ENCODE measurements at regions of chr17 and their contacts with region 1.

Region 1: GRCh38 chr17:74736513-74737298 is at the start of gene RAB37:
- DNase-seq: peak; percentile 65
- ATAC-seq: peak; percentile 19
- H3K4me3 Mint-ChIP-seq: peak within 1 kb of the TSS; percentile 68
- H3K27ac Mint-ChIP-seq: peak within 1 kb of the TSS; percentile 79
- H3K4me1 Mint-ChIP-seq: peaks cover 49% of the 10 kb centered on the region
- H3K27me3 Mint-ChIP-seq: no peaks in the 10 kb centered on the region
- total RNA-seq, gene RAB37: 2.7 to 3.5 TPM

Region 2: DNA sequence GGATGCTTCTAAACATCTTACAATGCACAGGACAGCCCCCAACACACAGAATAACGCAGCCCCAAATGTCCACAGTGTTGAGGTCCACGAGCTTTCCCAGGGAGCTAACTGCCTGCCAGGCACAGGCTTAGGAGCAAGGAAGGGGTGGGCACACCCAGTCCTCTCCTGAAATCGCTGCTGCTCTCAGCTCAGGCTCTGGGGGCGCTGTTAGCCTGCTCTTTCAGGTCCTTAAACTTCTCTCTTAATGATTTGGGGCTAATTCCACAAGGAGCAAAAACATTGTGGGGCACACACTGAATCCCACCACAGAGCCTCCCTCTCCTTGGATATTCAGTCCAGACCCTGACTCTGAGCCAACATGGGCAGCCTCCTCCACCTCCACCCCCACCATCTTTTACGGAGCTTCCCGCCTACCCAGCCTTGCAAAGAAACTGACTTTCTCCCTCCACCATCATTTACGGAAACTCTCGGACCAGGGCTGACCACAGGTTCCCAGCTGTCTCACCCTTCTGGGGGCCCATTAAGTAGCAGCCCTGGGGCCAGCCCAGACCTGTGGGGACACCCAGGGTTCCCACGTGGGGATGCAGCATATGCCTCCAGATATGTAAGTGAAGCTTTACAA is 170.5 kb before region 1 on chr17:
- CTCF ChIA-PET with region 1: interaction called, 9 read pairs
- POLR2A ChIA-PET with region 1: no interaction called
- intact Hi-C with region 1: loop called in 1 of 2 experiments (anchors 5 kb)
- DNase-seq: peak; percentile 66
- ATAC-seq: peak; percentile 47
- H3K4me3 Mint-ChIP-seq: no peak overlapping the region
- H3K27ac Mint-ChIP-seq: no peak overlapping the region
- H3K4me1 Mint-ChIP-seq: peaks cover 23% of the 10 kb centered on the region
- H3K27me3 Mint-ChIP-seq: peaks cover 8% of the 10 kb centered on the region

Region 3: DNA sequence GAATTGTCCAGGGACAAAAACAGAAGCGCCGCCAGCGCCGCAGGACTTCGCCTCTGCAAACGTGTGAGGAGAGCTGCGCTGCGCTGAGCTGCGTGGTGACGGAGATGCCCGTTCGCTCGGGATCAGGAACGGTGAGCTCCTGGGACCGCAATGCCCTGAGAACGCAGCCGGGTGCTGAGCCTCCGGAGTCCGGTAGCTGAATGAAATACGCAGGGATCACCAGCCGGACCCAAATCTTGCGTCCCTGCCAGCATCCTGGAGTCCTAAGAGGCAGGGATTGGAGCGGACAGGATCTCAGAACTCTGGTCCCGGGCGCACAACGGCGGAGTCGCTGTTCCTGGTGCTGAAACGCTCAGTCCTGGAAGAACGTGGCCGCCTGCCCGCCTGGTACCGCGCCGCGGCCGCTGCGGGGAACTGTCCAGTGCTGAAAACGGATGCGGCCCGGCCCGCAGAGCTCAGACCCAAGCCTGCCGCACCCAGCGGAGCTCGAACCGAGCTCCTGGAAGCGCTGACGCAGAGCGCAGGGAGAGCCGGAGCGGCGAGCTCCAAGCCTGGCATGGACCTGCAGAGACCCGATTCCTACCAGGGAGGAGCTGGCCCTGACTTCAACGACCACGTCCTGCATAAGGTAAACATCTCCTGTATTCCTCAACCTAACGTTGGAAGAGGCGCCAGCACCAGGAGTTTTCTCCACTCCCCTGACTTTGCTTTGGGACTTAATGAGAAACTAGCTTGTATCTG is 65.5 kb before region 1 on chr17:
- CTCF ChIA-PET with region 1: interaction called, 21 read pairs
- POLR2A ChIA-PET with region 1: no interaction called
- intact Hi-C with region 1: no loop called
- DNase-seq: peak; percentile 88
- ATAC-seq: peak; percentile 94
- H3K4me3 Mint-ChIP-seq: no peak overlapping the region
- H3K27ac Mint-ChIP-seq: no peak overlapping the region
- H3K4me1 Mint-ChIP-seq: no peaks in the 10 kb centered on the region
- H3K27me3 Mint-ChIP-seq: peaks cover 39% of the 10 kb centered on the region

Region 4: DNA sequence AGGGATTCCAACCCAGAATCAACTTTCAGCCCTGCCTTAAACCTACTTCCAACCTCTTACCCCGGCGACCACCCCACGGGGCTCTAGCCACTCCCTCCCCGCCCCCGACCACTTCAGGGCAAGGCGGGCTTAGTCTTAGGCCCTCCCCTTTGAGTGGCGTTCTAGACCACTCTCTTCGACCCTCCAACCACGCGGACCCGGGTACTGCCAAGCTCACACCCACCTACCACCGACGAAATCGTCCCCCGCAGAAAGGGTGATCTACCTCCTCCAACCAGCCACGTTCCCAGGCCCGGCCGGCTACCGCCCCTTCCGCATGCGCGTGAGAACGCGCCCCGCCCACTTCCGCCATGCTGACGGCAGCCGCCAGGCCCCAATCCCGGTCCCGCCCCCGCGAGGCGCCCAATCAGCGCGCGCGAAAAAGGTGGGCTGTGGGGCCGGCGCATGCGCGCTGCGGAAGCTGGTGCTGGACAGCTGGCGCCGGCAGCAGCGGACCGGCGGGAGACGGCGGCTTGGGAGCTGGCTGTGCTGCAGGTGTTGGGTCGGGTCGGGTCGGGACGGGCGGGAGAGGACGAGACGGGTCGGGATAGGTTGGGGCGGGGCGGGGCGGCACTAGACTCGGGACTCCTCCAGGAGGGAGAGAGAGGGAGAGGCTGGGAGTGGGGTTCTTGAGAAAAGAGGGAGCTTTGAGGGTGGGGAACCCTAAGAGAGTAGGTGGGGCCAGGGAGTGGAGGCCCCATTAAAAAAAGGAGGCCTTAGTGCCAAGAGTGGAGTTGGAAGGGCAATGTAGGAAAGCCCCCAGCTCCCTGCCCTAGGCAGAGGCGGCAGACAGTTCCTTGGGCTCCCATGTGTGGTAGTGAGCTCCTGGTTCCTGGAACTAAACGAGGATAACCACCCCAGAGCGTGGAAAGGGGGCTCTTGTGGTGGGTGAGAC is 39.6 kb after region 1 on chr17 and contains the start of gene NAT9:
- CTCF ChIA-PET with region 1: interaction called, 19 read pairs
- POLR2A ChIA-PET with region 1: interaction called, 6 read pairs
- intact Hi-C with region 1: no loop called
- DNase-seq: peak; percentile 100
- ATAC-seq: peak; percentile 76
- H3K4me3 Mint-ChIP-seq: peak within 1 kb of the TSS; percentile 98
- H3K27ac Mint-ChIP-seq: peak within 1 kb of the TSS; percentile 94
- H3K4me1 Mint-ChIP-seq: peaks cover 59% of the 10 kb centered on the region
- H3K27me3 Mint-ChIP-seq: no peaks in the 10 kb centered on the region
- total RNA-seq, gene NAT9: 23.7 to 39.6 TPM

Region 5: DNA sequence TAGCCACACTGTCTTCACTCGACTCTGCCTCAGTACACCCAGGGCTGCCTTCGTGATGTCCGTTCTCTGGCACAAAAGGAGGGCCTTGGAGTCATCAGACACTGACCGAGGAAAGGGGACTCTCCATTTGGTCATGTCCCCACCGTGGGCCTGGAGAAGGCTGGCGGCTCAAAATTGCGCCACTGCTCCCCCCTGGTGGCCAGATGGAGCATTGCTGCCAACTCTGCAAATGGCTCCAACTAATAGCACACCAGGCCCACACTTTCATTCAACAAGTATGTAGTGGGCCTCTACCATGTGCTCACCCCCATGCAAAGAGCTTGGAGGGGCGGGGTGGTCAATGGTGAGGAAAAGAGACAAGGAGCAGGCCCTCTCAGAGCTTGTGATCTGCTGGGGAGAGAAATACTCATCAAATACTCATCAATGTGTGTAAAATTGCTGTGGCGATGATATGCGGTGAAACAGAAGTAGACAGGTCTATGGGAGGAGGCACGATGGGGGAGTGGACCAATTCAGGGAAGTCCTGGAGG is 128.2 kb after region 1 on chr17:
- CTCF ChIA-PET with region 1: interaction called, 19 read pairs
- POLR2A ChIA-PET with region 1: no interaction called
- intact Hi-C with region 1: no loop called
- DNase-seq: peak; percentile 83
- ATAC-seq: peak; percentile 65
- H3K4me3 Mint-ChIP-seq: no peak overlapping the region
- H3K27ac Mint-ChIP-seq: peak overlapping the region; percentile 39
- H3K4me1 Mint-ChIP-seq: peaks cover 11% of the 10 kb centered on the region
- H3K27me3 Mint-ChIP-seq: peaks cover 12% of the 10 kb centered on the region

Measured in activated CD4-positive, alpha-beta T cell treated with anti-CD3 and anti-CD28 coated beads for 36 hours (primary cell).